ENCODE measurements at regions of chr4 and their contacts with region 1.

Region 1: GRCh38 chr4:177047070-177047850 is 254.5 kb upstream of the VEGFC start:
- DNase-seq: peak; percentile 10 to 45 (median 17)
- H3K4me3 ChIP-seq: no peak overlapping the region
- H3K4me3 Mint-ChIP-seq: no peak overlapping the region
- H3K27ac ChIP-seq: no peak overlapping the region
- H3K27ac Mint-ChIP-seq: no peak overlapping the region
- H3K4me1 ChIP-seq: no peaks in the 10 kb centered on the region
- H3K4me1 Mint-ChIP-seq: no peaks in the 10 kb centered on the region
- H3K27me3 ChIP-seq: peaks cover 0 to 2% of the 10 kb centered on the region in 2 donors
- H3K27me3 Mint-ChIP-seq: peaks cover 0 to 5% (median 3%) of the 10 kb centered on the region in 3 donors
- CTCF ChIP-seq: peak; percentile 78

Region 2: DNA sequence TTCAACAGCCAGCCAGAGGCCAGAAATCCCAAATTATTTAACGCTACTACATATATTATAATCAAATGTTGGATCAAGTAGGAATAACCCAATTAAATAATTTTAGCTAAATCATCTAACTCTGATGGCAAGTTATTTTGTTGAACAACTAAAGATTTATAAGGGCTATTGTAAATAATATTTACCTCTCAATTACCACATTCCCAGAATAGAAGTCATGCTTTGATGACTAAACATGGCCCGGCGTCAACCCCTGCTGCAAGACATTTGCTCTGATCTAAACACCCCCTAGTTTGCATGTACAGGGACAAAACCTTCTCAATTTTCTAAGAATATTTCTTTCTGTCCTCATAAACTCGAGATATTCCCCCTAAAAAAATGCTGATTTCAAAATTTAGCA is 268.8 kb before region 1 on chr4:
- intact Hi-C with region 1: no loop called
- DNase-seq: no peak
- H3K4me3 ChIP-seq: no peak overlapping the region
- H3K4me3 Mint-ChIP-seq: no peak overlapping the region
- H3K27ac ChIP-seq: no peak overlapping the region
- H3K27ac Mint-ChIP-seq: no peak overlapping the region
- H3K4me1 ChIP-seq: no peaks in the 10 kb centered on the region
- H3K4me1 Mint-ChIP-seq: no peaks in the 10 kb centered on the region
- H3K27me3 ChIP-seq: no peaks in the 10 kb centered on the region
- H3K27me3 Mint-ChIP-seq: peaks cover 0 to 3% (median 0%) of the 10 kb centered on the region in 3 donors
- CTCF ChIP-seq: no peak

Region 3: DNA sequence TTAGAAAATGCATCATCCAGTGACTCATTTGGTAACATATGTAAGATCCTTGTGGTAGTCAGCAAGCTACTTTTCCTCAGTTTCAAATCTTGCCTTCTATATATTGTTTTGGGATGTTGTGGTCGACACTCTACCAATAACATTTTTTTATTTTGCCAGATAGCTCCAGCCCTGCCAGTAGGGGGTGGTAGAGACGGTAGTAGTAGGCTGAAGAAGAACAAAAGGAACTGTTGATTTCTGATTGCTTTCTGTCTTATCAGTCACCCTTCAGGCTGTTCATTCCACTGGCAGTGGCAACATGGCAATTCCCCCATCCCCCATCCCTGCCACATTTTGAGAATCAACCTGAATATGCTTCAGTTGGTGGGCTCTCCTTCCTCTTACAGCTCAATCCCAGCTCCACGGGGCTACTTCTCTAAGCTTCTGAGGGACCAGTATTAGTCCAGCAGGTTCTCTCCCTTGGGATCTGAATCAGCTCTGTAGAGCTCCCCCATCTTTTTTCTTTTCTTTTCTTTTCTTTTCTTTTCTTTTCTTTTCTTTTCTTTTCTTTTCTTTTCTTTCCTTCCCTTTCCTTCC is 83.1 kb before region 1 on chr4:
- intact Hi-C with region 1: loop called in 1 of 2 experiments (anchors 10 kb)
- DNase-seq: peak in 1 of 3 donors; percentile 26
- H3K4me3 ChIP-seq: no peak overlapping the region
- H3K4me3 Mint-ChIP-seq: no peak overlapping the region
- H3K27ac ChIP-seq: no peak overlapping the region
- H3K27ac Mint-ChIP-seq: no peak overlapping the region
- H3K4me1 ChIP-seq: no peaks in the 10 kb centered on the region
- H3K4me1 Mint-ChIP-seq: no peaks in the 10 kb centered on the region
- H3K27me3 ChIP-seq: no peaks in the 10 kb centered on the region
- H3K27me3 Mint-ChIP-seq: peaks cover 0 to 5% (median 0%) of the 10 kb centered on the region in 3 donors
- CTCF ChIP-seq: peak; percentile 42